B cell (primary cell): ENCODE measurements at regions of chr16 and their contacts with region 1.

Region 1: DNA sequence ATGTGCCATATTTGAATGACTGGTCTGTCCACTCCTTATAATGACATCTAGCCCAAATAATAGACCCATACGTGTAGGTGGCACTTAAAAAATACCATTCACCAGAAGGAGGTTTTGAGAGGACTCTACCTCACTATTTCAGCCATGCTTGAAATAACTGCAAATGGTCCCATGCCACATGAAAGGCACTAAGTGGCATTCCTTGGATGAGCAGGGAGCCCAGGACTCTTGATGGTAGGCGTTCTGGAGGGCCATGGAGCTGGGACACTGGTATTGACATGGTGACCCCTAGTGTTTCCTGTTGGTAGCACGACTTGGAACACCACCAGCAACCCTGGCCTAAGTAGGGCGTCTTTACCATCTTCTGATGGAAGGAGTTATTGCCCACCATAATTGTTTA is 148.7 kb upstream of the ZFHX3 start:
- DNase-seq: peak; percentile 45
- ATAC-seq: no peak
- H3K4me3 ChIP-seq: no peak overlapping the region
- H3K4me3 Mint-ChIP-seq: no peak overlapping the region
- H3K27ac ChIP-seq: no peak overlapping the region
- H3K27ac Mint-ChIP-seq: no peak overlapping the region
- H3K4me1 ChIP-seq: no peaks in the 10 kb centered on the region
- H3K4me1 Mint-ChIP-seq: no peaks in the 10 kb centered on the region
- H3K27me3 ChIP-seq: peaks cover 0 to 2% (median 0%) of the 10 kb centered on the region in 4 experiments
- H3K27me3 Mint-ChIP-seq: peaks cover under 1% of the 10 kb centered on the region
- CTCF ChIP-seq: peak; percentile 59

Region 2: GRCh38 chr16:72400257-72400882 is 796.3 kb before region 1 on chr16:
- CTCF ChIA-PET with region 1: interaction called, 4 read pairs
- POLR2A ChIA-PET with region 1: no interaction called
- intact Hi-C with region 1: loop called (anchors 2 kb)
- DNase-seq: peak; percentile 54
- ATAC-seq: peak; percentile 63
- H3K4me3 ChIP-seq: no peak overlapping the region
- H3K4me3 Mint-ChIP-seq: no peak overlapping the region
- H3K27ac ChIP-seq: no peak overlapping the region
- H3K27ac Mint-ChIP-seq: no peak overlapping the region
- H3K4me1 ChIP-seq: no peaks in the 10 kb centered on the region
- H3K4me1 Mint-ChIP-seq: no peaks in the 10 kb centered on the region
- H3K27me3 ChIP-seq: no peaks in the 10 kb centered on the region
- H3K27me3 Mint-ChIP-seq: no peaks in the 10 kb centered on the region
- CTCF ChIP-seq: peak; percentile 91

Region 3: GRCh38 chr16:72501739-72502593 is 694.7 kb before region 1 on chr16:
- CTCF ChIA-PET with region 1: interaction called, 23 read pairs
- POLR2A ChIA-PET with region 1: no interaction called
- intact Hi-C with region 1: no loop called
- DNase-seq: peak; percentile 60
- ATAC-seq: peak; percentile 36
- H3K4me3 ChIP-seq: no peak overlapping the region
- H3K4me3 Mint-ChIP-seq: no peak overlapping the region
- H3K27ac ChIP-seq: no peak overlapping the region
- H3K27ac Mint-ChIP-seq: no peak overlapping the region
- H3K4me1 ChIP-seq: no peaks in the 10 kb centered on the region
- H3K4me1 Mint-ChIP-seq: peaks cover 2% of the 10 kb centered on the region
- H3K27me3 ChIP-seq: no peaks in the 10 kb centered on the region
- H3K27me3 Mint-ChIP-seq: no peaks in the 10 kb centered on the region
- CTCF ChIP-seq: peak; percentile 78

Region 4: DNA sequence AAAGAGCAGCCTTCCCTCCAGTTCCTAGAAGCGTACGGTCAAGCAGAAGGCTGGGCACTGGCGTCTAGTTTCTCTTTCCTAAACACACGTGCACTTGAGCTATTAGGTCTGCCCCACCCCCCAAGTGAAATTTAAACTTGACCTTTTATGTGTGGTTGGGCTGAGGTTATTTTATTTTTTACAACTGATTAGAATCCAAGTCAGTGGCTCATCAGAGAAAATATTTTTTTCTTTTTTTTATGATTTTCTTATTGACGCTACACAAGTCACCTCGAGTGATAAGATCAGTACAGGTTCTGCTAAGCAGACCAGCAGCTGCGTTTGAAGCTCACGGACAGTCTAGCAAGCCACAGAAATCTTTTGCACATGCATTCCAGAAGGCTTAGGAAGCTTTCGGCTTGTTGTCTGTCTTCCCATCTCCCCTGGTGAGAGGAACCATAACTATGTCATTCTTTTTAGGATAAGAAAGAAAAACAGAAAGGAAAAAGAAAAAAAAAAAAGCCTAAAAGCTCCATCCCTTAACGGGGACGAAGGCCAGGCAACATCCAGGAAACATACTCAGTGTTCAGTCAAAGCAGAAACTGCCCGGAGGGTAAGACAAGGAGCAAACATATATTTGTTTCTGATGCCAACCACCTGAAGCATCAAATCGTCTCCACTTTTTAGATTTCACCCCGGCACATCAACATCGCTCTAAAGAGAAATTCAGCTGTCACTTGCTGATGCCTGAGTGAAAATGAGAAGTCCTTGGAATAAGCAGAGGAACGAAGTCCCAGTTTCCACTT is 243.7 kb before region 1 on chr16:
- CTCF ChIA-PET with region 1: no interaction called
- POLR2A ChIA-PET with region 1: no interaction called
- intact Hi-C with region 1: no loop called
- DNase-seq: no peak
- ATAC-seq: no peak
- H3K4me3 ChIP-seq: no peak overlapping the region
- H3K4me3 Mint-ChIP-seq: no peak overlapping the region
- H3K27ac ChIP-seq: no peak overlapping the region
- H3K27ac Mint-ChIP-seq: no peak overlapping the region
- H3K4me1 ChIP-seq: no peaks in the 10 kb centered on the region
- H3K4me1 Mint-ChIP-seq: no peaks in the 10 kb centered on the region
- H3K27me3 ChIP-seq: no peaks in the 10 kb centered on the region
- H3K27me3 Mint-ChIP-seq: no peaks in the 10 kb centered on the region
- CTCF ChIP-seq: no peak